OCI-LY7 (cell line): ENCODE measurements at regions of chr15 and their contacts with region 1.

Region 1: GRCh38 chr15:26013981-26014380 is 150.9 kb upstream of the ATP10A start:
- DNase-seq: no peak
- H3K4me3 ChIP-seq: no peak overlapping the region
- H3K27ac ChIP-seq: no peak overlapping the region
- H3K4me1 ChIP-seq: no peaks in the 10 kb centered on the region
- CTCF ChIP-seq: no peak

Region 2: DNA sequence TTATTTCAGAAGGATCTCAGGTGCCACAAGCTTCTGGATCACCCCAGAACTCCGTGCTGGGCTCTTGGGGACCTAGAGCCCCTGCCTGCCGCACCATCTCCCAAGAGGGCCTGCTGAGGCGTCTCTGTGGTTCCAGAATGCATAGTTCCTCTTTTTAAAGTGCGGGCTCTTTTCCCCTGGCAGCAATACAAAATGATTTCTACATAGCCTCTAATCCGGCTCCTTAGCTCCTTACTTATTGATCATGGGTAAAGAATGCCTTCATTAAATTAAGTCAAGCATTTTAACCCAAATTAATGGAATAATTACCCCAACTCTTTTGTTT is 272.8 kb before region 1 on chr15:
- CTCF ChIA-PET with region 1: no interaction called
- POLR2A ChIA-PET with region 1: no interaction called
- intact Hi-C with region 1: no loop called
- DNase-seq: peak; percentile 24
- H3K4me3 ChIP-seq: no peak overlapping the region
- H3K27ac ChIP-seq: no peak overlapping the region
- H3K4me1 ChIP-seq: no peaks in the 10 kb centered on the region
- CTCF ChIP-seq: no peak

Region 3: GRCh38 chr15:25830844-25831451 is 183.0 kb before region 1 on chr15:
- CTCF ChIA-PET with region 1: no interaction called
- POLR2A ChIA-PET with region 1: no interaction called
- intact Hi-C with region 1: no loop called
- DNase-seq: no peak
- H3K4me3 ChIP-seq: no peak overlapping the region
- H3K27ac ChIP-seq: no peak overlapping the region
- H3K4me1 ChIP-seq: peaks cover 32% of the 10 kb centered on the region
- CTCF ChIP-seq: no peak

Region 4: DNA sequence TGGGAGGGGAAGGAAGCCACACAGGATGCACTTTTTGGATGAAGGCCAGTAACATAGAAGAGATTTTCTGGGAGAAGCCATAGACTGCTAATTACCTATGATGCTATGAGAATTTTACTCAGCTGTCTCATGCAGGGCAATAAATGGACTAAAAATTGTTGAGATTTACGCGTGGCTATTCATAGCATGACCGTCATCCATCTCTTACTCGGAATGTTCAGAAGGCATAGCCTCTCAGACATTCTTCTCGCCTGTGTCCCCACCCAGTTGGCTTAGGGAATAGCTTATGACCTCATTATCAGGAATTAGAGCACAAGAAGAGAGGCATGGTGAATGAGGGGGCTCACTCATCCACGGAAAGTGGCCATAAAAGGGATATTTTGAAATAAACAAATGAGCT is 42.9 kb before region 1 on chr15:
- CTCF ChIA-PET with region 1: no interaction called
- POLR2A ChIA-PET with region 1: no interaction called
- intact Hi-C with region 1: no loop called
- DNase-seq: no peak
- H3K4me3 ChIP-seq: no peak overlapping the region
- H3K27ac ChIP-seq: no peak overlapping the region
- H3K4me1 ChIP-seq: no peaks in the 10 kb centered on the region
- CTCF ChIP-seq: no peak

Region 5: DNA sequence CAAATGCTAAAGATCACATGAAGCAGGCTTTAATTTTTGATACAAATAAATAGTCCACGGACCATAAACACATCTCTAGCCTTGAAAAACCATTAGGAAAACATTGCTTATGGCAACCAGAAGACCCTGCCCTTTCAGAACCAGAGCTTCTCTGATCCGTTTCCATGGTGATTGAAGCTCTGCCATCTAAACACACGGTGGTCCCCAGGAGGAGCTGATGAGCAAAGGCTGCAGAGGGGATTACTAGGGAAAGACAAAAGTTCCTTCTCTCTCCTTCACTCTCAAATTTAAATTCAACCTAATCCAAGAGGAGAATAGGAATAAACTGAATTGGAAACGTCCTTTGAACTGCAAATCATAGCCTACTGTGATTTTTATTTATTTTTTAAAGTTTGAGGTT is 28.8 kb before region 1 on chr15:
- CTCF ChIA-PET with region 1: no interaction called
- POLR2A ChIA-PET with region 1: no interaction called
- intact Hi-C with region 1: no loop called
- DNase-seq: no peak
- H3K4me3 ChIP-seq: no peak overlapping the region
- H3K27ac ChIP-seq: no peak overlapping the region
- H3K4me1 ChIP-seq: no peaks in the 10 kb centered on the region
- CTCF ChIP-seq: no peak

Region 6: DNA sequence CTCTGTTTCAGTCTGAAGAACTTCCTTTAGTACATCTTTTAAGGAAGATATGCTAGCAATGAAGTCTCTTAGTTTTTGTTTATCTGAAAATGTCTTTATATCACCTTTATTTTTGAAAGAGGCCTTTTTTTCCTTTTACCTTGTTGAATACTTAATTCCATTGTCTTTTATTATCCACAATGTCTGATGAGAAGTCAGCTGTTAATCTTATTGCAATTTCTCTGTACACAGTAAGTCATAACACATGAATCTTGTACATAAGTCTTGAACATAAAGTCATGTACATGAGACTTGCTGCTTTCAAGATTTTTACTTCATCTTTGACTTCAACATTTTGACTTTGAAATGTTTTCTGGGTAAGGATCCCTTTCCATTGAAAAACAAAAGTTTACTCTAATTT is 273.4 kb after region 1 on chr15:
- CTCF ChIA-PET with region 1: no interaction called
- POLR2A ChIA-PET with region 1: no interaction called
- intact Hi-C with region 1: loop called (anchors 5 kb)
- DNase-seq: peak; percentile 2
- H3K4me3 ChIP-seq: no peak overlapping the region
- H3K27ac ChIP-seq: no peak overlapping the region
- H3K4me1 ChIP-seq: no peaks in the 10 kb centered on the region
- CTCF ChIP-seq: no peak